ENCODE measurements at regions of chr17 and their contacts with region 1.

Region 1: GRCh38 chr17:69523244-69523861 is 108.9 kb downstream of the MAP2K6 start:
- DNase-seq: peak; percentile 50
- H3K4me3 ChIP-seq: no peak overlapping the region
- H3K27ac ChIP-seq: no peak overlapping the region
- H3K4me1 ChIP-seq: no peaks in the 10 kb centered on the region; a peak in 1 of 4 replicates
- H3K27me3 ChIP-seq: no peaks in the 10 kb centered on the region
- CTCF ChIP-seq: peak; percentile 86
- EP300 ChIP-seq: no peak
- RAD21 ChIP-seq: peak; percentile 90

Region 2: DNA sequence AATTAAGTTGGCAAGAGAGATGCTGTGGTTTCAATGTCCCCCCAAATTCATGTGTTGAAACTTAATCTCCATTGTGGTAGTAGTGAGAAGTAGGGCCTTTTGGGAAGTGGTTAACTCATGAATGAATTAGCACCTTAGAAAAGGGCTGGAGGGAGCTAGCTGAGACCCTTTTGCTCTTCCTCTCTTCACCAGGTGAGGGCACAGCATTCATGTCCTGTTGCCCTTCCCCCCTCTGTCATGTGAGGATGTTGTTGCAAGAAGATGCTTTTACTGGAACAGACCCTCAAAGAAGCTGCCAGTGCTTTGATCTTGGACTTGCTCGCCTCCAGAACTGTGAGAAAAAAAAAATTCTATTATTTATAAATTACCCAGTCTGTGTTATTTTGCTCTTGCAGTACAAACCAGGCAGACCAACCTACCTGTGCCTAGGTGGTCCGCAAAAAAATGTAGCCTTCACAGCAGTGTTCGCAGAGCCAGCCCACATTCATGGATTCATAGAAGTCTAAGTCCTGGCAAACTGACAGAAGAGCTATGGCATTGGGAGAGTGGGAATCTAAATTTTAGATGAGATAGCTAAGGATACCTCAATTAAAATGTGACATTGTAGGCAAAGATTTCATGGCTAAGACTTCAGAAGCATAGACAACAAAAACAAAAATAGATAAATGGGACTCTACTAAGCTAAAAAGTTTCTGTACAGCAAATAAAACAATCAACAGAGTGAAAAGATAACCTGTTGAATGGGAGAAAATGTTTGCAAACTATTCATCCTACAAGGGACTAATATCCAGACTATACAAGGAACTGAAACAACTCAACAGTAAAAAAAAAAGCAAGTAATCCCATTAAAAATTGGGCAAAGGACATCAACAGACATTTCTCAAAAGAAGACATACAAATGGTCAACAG is 164.4 kb before region 1 on chr17:
- CTCF ChIA-PET with region 1: interaction called, 17 read pairs
- POLR2A ChIA-PET with region 1: no interaction called
- DNase-seq: peak; percentile 36
- H3K4me3 ChIP-seq: no peak overlapping the region
- H3K27ac ChIP-seq: no peak overlapping the region
- H3K4me1 ChIP-seq: no peaks in the 10 kb centered on the region
- H3K27me3 ChIP-seq: no peaks in the 10 kb centered on the region
- CTCF ChIP-seq: peak; percentile 27
- EP300 ChIP-seq: no peak
- RAD21 ChIP-seq: peak; percentile 61

Region 3: GRCh38 chr17:69402052-69402451 is 121.3 kb before region 1 on chr17:
- CTCF ChIA-PET with region 1: no interaction called
- POLR2A ChIA-PET with region 1: no interaction called
- DNase-seq: no peak
- H3K4me3 ChIP-seq: no peak overlapping the region
- H3K27ac ChIP-seq: no peak overlapping the region
- H3K4me1 ChIP-seq: no peaks in the 10 kb centered on the region
- H3K27me3 ChIP-seq: no peaks in the 10 kb centered on the region
- CTCF ChIP-seq: no peak
- EP300 ChIP-seq: no peak
- RAD21 ChIP-seq: no peak

Region 4: DNA sequence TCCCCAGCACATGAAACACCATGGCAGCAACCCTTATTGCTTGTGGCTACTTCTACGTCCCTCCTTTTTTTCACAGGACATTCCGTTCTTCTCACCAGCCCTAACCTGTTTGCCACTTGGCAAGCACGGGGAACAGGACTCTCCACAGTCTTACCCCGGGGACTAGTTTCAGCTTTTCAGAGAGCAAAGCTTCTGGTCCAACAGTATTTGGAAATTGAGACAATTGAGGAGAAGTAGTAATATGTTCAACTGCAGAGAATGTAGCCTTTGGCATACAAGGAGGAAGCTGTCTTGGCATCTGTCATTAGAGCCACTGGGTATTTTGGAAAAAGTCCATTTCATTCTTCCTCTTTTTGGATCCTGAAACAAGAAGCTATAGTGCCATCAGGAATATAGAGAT is 43.1 kb before region 1 on chr17:
- CTCF ChIA-PET with region 1: interaction called, 17 read pairs
- POLR2A ChIA-PET with region 1: no interaction called
- DNase-seq: no peak
- H3K4me3 ChIP-seq: no peak overlapping the region
- H3K27ac ChIP-seq: no peak overlapping the region
- H3K4me1 ChIP-seq: no peaks in the 10 kb centered on the region
- H3K27me3 ChIP-seq: no peaks in the 10 kb centered on the region
- CTCF ChIP-seq: no peak
- EP300 ChIP-seq: no peak
- RAD21 ChIP-seq: no peak

Region 5: GRCh38 chr17:69533481-69534234 is 10.3 kb after region 1 on chr17:
- CTCF ChIA-PET with region 1: interaction called, 33 read pairs
- POLR2A ChIA-PET with region 1: no interaction called
- DNase-seq: no peak
- H3K4me3 ChIP-seq: no peak overlapping the region
- H3K27ac ChIP-seq: no peak overlapping the region
- H3K4me1 ChIP-seq: no peaks in the 10 kb centered on the region
- H3K27me3 ChIP-seq: no peaks in the 10 kb centered on the region
- CTCF ChIP-seq: no peak
- EP300 ChIP-seq: no peak
- RAD21 ChIP-seq: no peak

Region 6: DNA sequence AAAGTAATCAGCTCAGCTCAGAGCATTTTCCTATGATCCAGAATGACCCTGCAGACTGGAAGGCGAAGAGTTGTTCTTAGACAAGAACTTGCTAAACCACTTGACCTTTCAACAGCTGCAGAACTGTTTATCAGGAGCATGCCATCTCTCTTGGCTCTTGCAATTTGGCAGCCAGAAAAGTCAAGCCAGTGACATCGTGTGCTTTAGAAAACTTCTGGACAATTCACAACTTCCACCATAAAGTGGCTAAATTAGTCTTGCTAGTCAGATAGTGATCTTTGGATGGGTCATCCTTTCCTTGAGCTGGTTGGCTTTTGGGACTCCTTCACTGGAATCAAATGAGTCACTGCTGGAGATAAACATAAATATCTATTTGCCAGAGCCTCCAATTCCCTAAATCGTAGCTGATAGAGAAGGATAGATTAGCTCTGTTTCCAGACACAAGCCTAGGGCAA is 37.7 kb after region 1 on chr17:
- CTCF ChIA-PET with region 1: interaction called, 12 read pairs
- POLR2A ChIA-PET with region 1: no interaction called
- DNase-seq: peak; percentile 36
- H3K4me3 ChIP-seq: 0 out of 4 replicates have a peak overlapping the region, but pooled peaks of 1 of the 2 experiments have one; percentile 5
- H3K27ac ChIP-seq: peak overlapping the region in 1 of 2 experiments; percentile 12; a peak in 2 of 4 replicates
- H3K4me1 ChIP-seq: peaks cover 5 to 6% of the 10 kb centered on the region in 2 experiments; a peak in 2 of 4 replicates
- H3K27me3 ChIP-seq: no peaks in the 10 kb centered on the region
- CTCF ChIP-seq: no peak
- EP300 ChIP-seq: peak in 1 of 2 experiments; percentile 76; a peak in 3 of 4 replicates
- RAD21 ChIP-seq: no peak

Region 7: GRCh38 chr17:69978056-69978646 is 454.8 kb after region 1 on chr17:
- CTCF ChIA-PET with region 1: no interaction called
- POLR2A ChIA-PET with region 1: no interaction called
- DNase-seq: no peak
- H3K4me3 ChIP-seq: no peak overlapping the region
- H3K27ac ChIP-seq: no peak overlapping the region
- H3K4me1 ChIP-seq: peaks cover 0 to 2% of the 10 kb centered on the region in 2 experiments; a peak in 1 of 4 replicates
- H3K27me3 ChIP-seq: no peaks in the 10 kb centered on the region
- CTCF ChIP-seq: no peak
- EP300 ChIP-seq: no peak
- RAD21 ChIP-seq: no peak

Region 8: GRCh38 chr17:70629902-70630301 is 1106.5 kb after region 1 on chr17:
- CTCF ChIA-PET with region 1: interaction called, 21 read pairs
- POLR2A ChIA-PET with region 1: no interaction called
- DNase-seq: peak; percentile 43
- H3K4me3 ChIP-seq: no peak overlapping the region
- H3K27ac ChIP-seq: no peak overlapping the region
- H3K4me1 ChIP-seq: no peaks in the 10 kb centered on the region
- H3K27me3 ChIP-seq: peaks cover 6% of the 10 kb centered on the region; the same call in 1 of the 2 replicates
- CTCF ChIP-seq: peak; percentile 56
- EP300 ChIP-seq: no peak
- RAD21 ChIP-seq: peak; percentile 84

Measured in SK-N-SH (cell line).